ENCODE measurements at regions of chrX and their contacts with region 1.

Region 1: DNA sequence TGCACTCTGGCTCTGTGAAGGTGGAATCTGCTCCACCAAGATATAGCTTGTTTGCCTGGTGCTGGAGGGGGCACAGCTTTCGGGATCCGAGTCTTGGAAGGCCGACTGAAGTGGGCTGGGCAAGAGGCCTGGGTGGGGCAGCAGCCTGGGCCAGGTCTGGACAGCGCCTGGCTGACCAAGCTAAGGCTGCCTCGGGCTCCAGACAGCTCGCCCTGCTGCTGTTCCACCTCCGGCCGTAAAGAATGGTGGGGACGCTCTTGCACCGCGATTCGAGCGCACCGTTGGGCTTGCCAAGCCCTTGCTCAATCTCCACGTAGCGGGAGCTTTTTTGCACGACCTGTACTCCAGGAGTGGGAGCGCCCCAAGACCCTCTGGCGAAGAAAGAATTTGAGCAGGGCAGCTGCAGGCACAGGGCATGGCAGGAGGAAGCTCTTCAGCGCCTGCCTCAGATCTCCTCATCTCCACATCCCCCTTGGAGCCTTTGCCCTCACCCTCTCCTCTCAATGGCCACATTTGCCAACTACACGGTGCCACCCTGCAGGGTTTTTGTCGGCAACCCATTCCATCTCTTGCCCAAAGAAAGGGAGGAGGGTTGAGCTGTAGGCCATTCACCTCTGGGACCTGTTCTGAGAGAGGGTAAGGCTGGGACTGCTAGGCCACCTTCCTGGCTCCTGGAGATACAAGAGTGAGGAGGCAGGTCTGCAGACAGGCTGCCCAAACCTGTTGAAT is 18.9 kb downstream of the CNGA2 start:
- DNase-seq: peak; percentile 41
- H3K4me3 ChIP-seq: no peak overlapping the region
- H3K27ac ChIP-seq: no peak overlapping the region
- H3K4me1 ChIP-seq: peaks cover 6% of the 10 kb centered on the region
- H3K27me3 ChIP-seq: no peaks in the 10 kb centered on the region
- CTCF ChIP-seq: peak; percentile 71 to 88

Region 2: GRCh38 chrX:151796576-151796975 is 43.1 kb after region 1 on chrX:
- CTCF ChIA-PET with region 1: no interaction called
- dilution Hi-C with region 1: no loop called
- in situ Hi-C with region 1: no loop called
- intact Hi-C with region 1: loop called (anchors 5 kb)
- DNase-seq: peak; percentile 74
- H3K4me3 ChIP-seq: no peak overlapping the region
- H3K27ac ChIP-seq: no peak overlapping the region
- H3K4me1 ChIP-seq: peaks cover 13% of the 10 kb centered on the region
- H3K27me3 ChIP-seq: no peaks in the 10 kb centered on the region
- CTCF ChIP-seq: no peak

Region 3: GRCh38 chrX:151889421-151889820 is 135.9 kb after region 1 on chrX:
- CTCF ChIA-PET with region 1: no interaction called
- dilution Hi-C with region 1: no loop called
- in situ Hi-C with region 1: no loop called
- intact Hi-C with region 1: no loop called
- DNase-seq: no peak
- H3K4me3 ChIP-seq: no peak overlapping the region
- H3K27ac ChIP-seq: no peak overlapping the region
- H3K4me1 ChIP-seq: no peaks in the 10 kb centered on the region
- H3K27me3 ChIP-seq: no peaks in the 10 kb centered on the region
- CTCF ChIP-seq: no peak

Region 4: GRCh38 chrX:151901826-151902225 is 148.3 kb after region 1 on chrX:
- CTCF ChIA-PET with region 1: no interaction called
- dilution Hi-C with region 1: no loop called
- in situ Hi-C with region 1: no loop called
- intact Hi-C with region 1: loop called (anchors 1 kb)
- DNase-seq: no peak
- H3K4me3 ChIP-seq: no peak overlapping the region
- H3K27ac ChIP-seq: no peak overlapping the region
- H3K4me1 ChIP-seq: peaks cover 8% of the 10 kb centered on the region
- H3K27me3 ChIP-seq: no peaks in the 10 kb centered on the region
- CTCF ChIP-seq: no peak

Region 5: GRCh38 chrX:152197465-152197864 is 444.0 kb after region 1 on chrX:
- CTCF ChIA-PET with region 1: no interaction called
- dilution Hi-C with region 1: no loop called
- in situ Hi-C with region 1: no loop called
- intact Hi-C with region 1: loop called (anchors 10 kb)
- DNase-seq: no peak
- H3K4me3 ChIP-seq: no peak overlapping the region
- H3K27ac ChIP-seq: no peak overlapping the region
- H3K4me1 ChIP-seq: no peaks in the 10 kb centered on the region
- H3K27me3 ChIP-seq: no peaks in the 10 kb centered on the region
- CTCF ChIP-seq: no peak

Region 6: GRCh38 chrX:152632445-152633097 is 879.1 kb after region 1 on chrX:
- CTCF ChIA-PET with region 1: interaction called, 5 read pairs
- dilution Hi-C with region 1: loop called (anchors 25 kb)
- in situ Hi-C with region 1: loop called (anchors 10 to 25 kb)
- intact Hi-C with region 1: loop called (anchors 1 kb)
- DNase-seq: peak; percentile 23
- H3K4me3 ChIP-seq: no peak overlapping the region
- H3K27ac ChIP-seq: no peak overlapping the region
- H3K4me1 ChIP-seq: no peaks in the 10 kb centered on the region
- H3K27me3 ChIP-seq: no peaks in the 10 kb centered on the region
- CTCF ChIP-seq: peak; percentile 79

Measured in mammary epithelial cell (primary cell).